Mammary epithelial cell (primary cell): ENCODE measurements at regions of chr19 and their contacts with region 1.

Region 1: DNA sequence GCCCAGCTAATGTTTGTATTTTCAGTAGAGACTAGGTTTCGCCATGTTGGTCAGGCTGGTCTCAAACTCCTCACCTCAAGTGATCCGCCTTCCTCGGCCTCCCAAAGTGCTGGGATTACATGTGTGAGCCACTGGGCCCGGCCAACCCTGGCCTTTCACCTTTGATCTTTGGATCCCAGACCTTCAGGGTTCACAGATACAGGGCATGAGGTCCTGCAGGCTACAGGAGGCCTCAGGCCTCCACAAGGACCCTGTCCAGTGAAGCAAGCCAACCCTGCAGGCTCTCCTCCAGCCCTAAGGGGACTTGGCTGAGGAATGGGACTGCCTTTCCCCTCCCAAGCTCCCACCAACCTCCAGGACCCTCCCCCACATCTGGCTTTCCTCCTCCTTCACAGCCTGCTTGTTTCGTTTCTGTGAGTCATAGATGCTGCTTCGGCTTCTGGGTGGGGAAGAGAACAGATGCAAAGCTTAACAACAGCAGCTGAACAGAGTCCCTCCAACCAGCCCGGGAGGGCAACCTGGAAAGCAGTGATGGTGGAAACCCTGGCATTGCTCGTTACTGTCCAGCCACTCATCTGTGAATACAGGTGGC is 11.8 kb downstream of the ARHGEF18 start:
- DNase-seq: no peak
- H3K4me3 ChIP-seq: no peak overlapping the region
- H3K27ac ChIP-seq: no peak overlapping the region
- H3K4me1 ChIP-seq: no peaks in the 10 kb centered on the region
- H3K27me3 ChIP-seq: no peaks in the 10 kb centered on the region
- CTCF ChIP-seq: no peak

Region 2: DNA sequence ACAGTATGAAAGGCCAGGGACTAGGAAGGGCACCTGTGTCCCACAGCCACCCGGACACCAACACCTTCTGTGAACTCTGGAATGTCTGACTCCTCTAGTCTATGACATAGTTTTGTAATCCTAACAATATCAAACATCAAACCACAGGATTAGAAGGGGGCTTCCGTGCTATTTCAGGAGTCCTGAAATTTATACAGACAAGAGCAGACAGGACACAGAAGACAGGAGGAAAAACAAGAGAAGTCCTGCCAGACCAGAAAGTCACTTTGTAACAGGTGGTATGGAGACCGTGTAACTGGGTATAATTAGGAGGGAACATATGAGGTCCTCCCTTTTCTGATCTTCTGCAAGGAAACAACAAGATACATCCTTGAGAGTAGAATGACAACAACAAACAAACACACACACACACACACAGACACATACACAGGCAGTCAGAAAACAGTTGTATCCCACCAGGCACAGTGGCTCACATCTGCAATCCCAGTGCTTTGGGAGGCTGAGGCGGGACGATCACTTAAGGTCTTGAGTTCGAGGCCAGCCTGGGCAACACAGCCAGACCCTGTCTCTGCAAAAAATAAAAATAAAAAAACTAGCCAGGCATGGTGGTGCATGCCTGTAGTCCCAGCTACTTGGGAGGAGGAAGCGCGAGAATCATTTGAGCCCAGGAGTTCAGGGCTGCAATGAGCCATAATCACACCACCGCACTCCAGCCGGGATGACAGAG is 79.4 kb before region 1 on chr19:
- CTCF ChIA-PET with region 1: no interaction called
- dilution Hi-C with region 1: loop called (anchors 5 kb)
- in situ Hi-C with region 1: no loop called
- intact Hi-C with region 1: no loop called
- DNase-seq: no peak
- H3K4me3 ChIP-seq: no peak overlapping the region
- H3K27ac ChIP-seq: no peak overlapping the region
- H3K4me1 ChIP-seq: no peaks in the 10 kb centered on the region
- H3K27me3 ChIP-seq: no peaks in the 10 kb centered on the region
- CTCF ChIP-seq: no peak

Region 3: GRCh38 chr19:7417671-7418324 is 57.3 kb after region 1 on chr19:
- CTCF ChIA-PET with region 1: no interaction called
- dilution Hi-C with region 1: no loop called
- in situ Hi-C with region 1: no loop called
- intact Hi-C with region 1: no loop called
- DNase-seq: no peak
- H3K4me3 ChIP-seq: no peak overlapping the region
- H3K27ac ChIP-seq: no peak overlapping the region
- H3K4me1 ChIP-seq: peaks cover 6% of the 10 kb centered on the region
- H3K27me3 ChIP-seq: no peaks in the 10 kb centered on the region
- CTCF ChIP-seq: no peak

Region 4: DNA sequence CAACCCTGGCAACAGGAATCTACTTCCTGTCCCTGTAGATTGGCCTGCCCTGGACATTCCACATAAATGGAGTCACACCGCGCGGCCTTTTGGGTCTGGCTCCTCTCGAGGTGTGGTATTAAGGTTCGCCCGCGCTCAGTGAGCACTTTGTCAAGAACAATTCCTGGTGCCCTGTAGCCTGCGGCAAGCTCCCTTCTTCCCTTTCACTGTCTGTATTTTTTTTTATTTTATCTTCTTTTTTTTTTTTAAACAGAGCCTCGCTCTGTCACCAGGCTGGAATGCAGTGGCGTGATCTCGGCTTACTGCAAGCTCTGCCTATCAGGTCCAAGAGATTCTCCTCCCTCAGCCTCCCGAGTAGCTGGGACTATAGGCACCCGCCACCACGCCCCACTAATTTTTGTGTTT is 100.1 kb after region 1 on chr19:
- CTCF ChIA-PET with region 1: no interaction called
- dilution Hi-C with region 1: loop called (anchors 5 kb)
- in situ Hi-C with region 1: no loop called
- intact Hi-C with region 1: no loop called
- DNase-seq: no peak
- H3K4me3 ChIP-seq: no peak overlapping the region
- H3K27ac ChIP-seq: no peak overlapping the region
- H3K4me1 ChIP-seq: no peaks in the 10 kb centered on the region
- H3K27me3 ChIP-seq: no peaks in the 10 kb centered on the region
- CTCF ChIP-seq: no peak